ENCODE measurements at regions of chr1 and their contacts with region 1.

Region 1: GRCh38 chr1:89198491-89199072 is at the start of gene GBP4:
- DNase-seq: peak; percentile 91
- H3K4me3 ChIP-seq: peak within 1 kb of the TSS; percentile 39 to 80 (median 64)
- H3K27ac ChIP-seq: peak within 1 kb of the TSS; percentile 81 to 91 (median 90)
- H3K4me1 ChIP-seq: peaks cover 16 to 83% (median 58%) of the 10 kb centered on the region in 6 donors
- H3K27me3 ChIP-seq: no peaks in the 10 kb centered on the region
- CTCF ChIP-seq: no peak
- POLR2A ChIP-seq: peak in 1 of 3 donors; percentile 74
- total RNA-seq, gene GBP4: 28.3 to 63.5 (median 40.0) TPM

Region 2: GRCh38 chr1:89259283-89259971 is 60.8 kb after region 1 on chr1:
- intact Hi-C with region 1: loop called (anchors 10 kb)
- DNase-seq: peak; percentile 81
- H3K4me3 ChIP-seq: peak overlapping the region in 1 of 8 donors; percentile 32
- H3K27ac ChIP-seq: peak overlapping the region in 6 of 8 donors; percentile 2 to 72 (median 61)
- H3K4me1 ChIP-seq: peaks cover 12 to 81% (median 44%) of the 10 kb centered on the region in 6 donors
- H3K27me3 ChIP-seq: no peaks in the 10 kb centered on the region
- CTCF ChIP-seq: no peak
- POLR2A ChIP-seq: no peak

Region 3: GRCh38 chr1:89298461-89298860 is 99.9 kb after region 1 on chr1:
- intact Hi-C with region 1: no loop called
- DNase-seq: no peak
- H3K4me3 ChIP-seq: no peak overlapping the region
- H3K27ac ChIP-seq: no peak overlapping the region
- H3K4me1 ChIP-seq: peaks cover 0 to 29% (median 9%) of the 10 kb centered on the region in 6 donors
- H3K27me3 ChIP-seq: no peaks in the 10 kb centered on the region
- CTCF ChIP-seq: no peak
- POLR2A ChIP-seq: no peak

Region 4: DNA sequence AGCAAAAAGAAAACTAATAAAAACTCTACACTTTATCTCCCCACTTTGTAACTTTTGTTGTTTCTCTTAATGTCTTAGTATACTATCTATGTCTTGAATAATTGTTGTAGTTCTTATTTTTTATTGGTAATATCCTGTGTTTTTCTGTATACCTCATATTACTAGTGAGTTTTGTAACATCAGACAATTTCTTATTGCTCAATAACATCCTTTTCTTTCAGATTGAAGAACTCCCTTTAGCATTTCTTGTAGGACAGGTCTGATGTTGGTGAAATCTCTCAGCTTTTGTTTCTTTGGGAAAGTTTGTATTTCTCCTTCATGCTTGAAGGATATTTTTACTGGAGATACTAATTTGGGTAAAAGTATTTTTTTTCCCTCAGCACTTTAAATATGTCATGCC is 246.2 kb after region 1 on chr1:
- intact Hi-C with region 1: no loop called
- DNase-seq: no peak
- H3K4me3 ChIP-seq: no peak overlapping the region
- H3K27ac ChIP-seq: no peak overlapping the region
- H3K4me1 ChIP-seq: no peaks in the 10 kb centered on the region
- H3K27me3 ChIP-seq: no peaks in the 10 kb centered on the region
- CTCF ChIP-seq: no peak
- POLR2A ChIP-seq: no peak

Region 5: DNA sequence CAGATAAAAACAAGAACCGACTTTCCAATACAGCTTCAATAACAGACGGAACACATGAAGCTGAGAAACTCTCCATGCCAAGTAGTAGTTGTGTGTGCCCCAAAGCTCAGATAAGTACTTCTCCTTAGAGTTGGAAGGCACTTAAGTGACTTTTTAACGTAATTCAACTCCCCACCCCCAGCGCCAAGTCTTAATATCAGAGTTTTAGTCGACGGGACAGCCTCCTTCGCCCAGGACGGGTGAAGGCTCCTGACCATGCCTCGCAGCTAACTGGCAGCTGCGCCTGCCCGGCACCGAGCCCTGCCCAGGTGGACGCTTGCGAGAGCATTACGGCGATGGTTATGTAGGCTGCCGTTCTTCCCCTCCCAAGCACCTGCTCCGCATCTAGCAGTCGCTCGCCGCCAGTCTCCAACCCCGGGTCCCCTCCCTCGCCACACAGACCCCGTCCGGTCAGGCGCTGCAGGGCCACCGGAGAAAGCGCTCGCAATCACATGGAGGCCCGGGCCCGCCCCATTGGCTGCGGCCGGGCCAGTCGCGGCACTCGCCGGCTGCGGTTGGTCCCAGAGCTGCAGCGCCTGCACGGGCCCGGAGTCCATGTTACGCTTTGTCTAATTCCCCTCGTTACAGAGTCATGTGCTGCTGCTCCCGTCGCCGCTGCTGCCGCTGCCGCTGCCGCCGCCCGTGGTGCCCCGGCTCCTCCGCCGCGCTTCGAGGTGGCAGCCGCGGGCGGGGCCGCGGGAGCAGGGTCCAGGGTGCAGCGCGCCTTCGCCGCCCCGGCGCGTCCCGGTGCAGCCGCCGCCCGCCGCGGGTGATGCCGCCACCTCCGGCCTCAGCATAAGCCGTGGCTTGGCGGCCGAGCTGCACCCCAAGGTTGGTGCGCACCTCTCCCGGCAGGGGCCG is 622.1 kb after region 1 on chr1 and contains the start of gene LRRC8D:
- intact Hi-C with region 1: no loop called
- DNase-seq: peak; percentile 96
- H3K4me3 ChIP-seq: peak within 1 kb of the TSS; percentile 85 to 99 (median 94)
- H3K27ac ChIP-seq: peak within 1 kb of the TSS; percentile 79 to 95 (median 92)
- H3K4me1 ChIP-seq: peaks cover 13 to 81% (median 38%) of the 10 kb centered on the region in 6 donors
- H3K27me3 ChIP-seq: no peaks in the 10 kb centered on the region
- CTCF ChIP-seq: peak in 1 of 11 experiments; percentile 12
- POLR2A ChIP-seq: peak in 2 of 3 donors; percentile 44 to 48
- total RNA-seq, gene LRRC8D: 27.5 to 42.0 (median 37.0) TPM

Region 6: GRCh38 chr1:90746857-90747256 is 1548.3 kb after region 1 on chr1:
- intact Hi-C with region 1: no loop called
- DNase-seq: no peak
- H3K4me3 ChIP-seq: no peak overlapping the region
- H3K27ac ChIP-seq: no peak overlapping the region
- H3K4me1 ChIP-seq: no peaks in the 10 kb centered on the region
- H3K27me3 ChIP-seq: peaks cover 0 to 37% (median 0%) of the 10 kb centered on the region in 7 donors
- CTCF ChIP-seq: no peak
- POLR2A ChIP-seq: no peak